Ascending aorta (tissue), 2 donors: ENCODE measurements at regions of chr19 and their contacts with region 1.

Region 1: GRCh38 chr19:49676690-49677231 is 310 bp upstream of the PRMT1 start:
- DNase-seq: peak; percentile 100
- H3K4me3 ChIP-seq: peak overlapping the region; percentile 95 to 97
- H3K27ac ChIP-seq: peak overlapping the region; percentile 93 to 94
- H3K4me1 ChIP-seq: peaks cover 0 to 27% of the 10 kb centered on the region in 2 donors
- H3K27me3 ChIP-seq: no peaks in the 10 kb centered on the region
- CTCF ChIP-seq: no peak

Region 2: DNA sequence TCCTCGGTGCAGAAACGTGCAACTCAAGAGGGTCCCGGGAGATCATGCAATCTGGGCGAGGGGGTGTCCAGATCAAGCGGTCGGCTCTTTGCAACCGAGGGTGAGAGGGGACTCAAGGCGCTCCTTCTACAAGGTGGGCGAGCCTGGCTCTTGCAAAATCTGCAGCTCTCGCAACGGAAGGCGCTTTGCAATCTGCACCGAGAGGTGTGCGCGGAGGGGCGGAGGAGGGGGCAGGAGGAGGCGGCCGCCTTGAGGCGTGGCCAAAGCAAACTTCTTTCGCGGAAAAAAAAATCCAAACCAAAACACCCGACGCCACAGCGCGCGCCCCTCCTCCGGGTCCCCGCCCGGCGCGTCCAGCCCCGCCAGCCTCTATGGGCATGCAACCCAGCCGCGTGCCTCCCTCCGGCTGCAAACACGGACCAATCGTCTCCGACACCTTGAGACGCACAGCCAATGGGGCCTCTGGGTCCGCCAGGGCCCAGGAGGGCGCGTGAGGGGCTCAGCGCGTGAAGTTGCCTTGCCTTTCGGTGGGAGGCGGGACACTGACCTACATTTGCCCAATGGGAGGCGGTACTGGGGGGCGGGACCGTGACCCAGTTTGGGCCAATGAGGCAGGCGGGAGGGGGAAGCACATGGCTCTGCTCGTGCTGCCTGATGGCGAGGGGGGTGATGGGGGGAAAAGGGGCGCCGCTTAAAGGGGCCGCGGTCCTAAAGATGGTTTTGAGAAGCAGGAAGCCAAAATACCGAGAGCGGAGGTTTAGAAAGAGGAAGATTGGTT is 1039.4 kb before region 1 on chr19 and contains the start of gene DBP:
- intact Hi-C with region 1: loop called (anchors 10 kb)
- DNase-seq: peak; percentile 98 to 100
- H3K4me3 ChIP-seq: peak within 1 kb of the TSS; percentile 66 to 89
- H3K27ac ChIP-seq: peak within 1 kb of the TSS; percentile 94 to 99
- H3K4me1 ChIP-seq: peaks cover 19 to 39% of the 10 kb centered on the region in 2 donors
- H3K27me3 ChIP-seq: no peaks in the 10 kb centered on the region
- CTCF ChIP-seq: no peak
- total RNA-seq, gene DBP: 0.21 TPM

Region 3: DNA sequence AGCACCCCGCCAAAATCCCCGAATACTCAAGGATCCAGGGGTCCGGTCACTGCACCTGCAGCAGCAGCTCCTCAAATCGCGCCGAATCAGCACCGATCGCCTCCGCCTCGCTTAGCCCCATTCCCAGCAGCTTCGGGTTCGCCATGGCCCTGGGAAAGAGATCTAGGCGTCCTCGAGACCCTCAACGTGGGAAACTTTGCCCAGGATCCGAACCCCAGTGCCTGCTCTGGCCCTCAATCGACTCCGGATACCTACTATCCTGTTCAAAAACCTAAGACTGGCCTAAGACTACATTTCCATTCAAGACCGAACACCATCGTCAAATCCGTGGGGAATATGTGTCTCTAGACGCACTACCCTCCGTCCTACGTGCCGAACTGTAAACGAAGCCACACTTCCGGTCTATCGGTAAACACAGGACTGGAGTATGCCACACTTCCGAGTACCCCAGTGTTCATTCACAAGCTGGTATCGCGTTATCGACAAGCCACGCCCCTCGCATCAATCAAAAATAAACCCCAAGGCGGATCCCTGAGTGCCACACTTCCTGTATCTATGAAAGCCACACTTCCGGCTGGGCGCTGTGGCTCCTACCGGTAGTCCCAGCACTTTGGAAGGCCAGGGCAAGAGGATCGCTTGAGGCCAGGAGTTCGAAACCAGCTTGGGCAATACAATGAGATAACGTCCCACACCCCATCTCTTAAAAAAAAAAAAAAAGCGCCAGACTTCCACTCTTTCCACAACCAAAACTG is 225.2 kb before region 1 on chr19 and contains the start of gene PIH1D1:
- intact Hi-C with region 1: loop called (anchors 5 kb)
- DNase-seq: peak; percentile 94 to 99
- H3K4me3 ChIP-seq: peak within 1 kb of the TSS; percentile 73 to 81
- H3K27ac ChIP-seq: peak within 1 kb of the TSS; percentile 88 to 95
- H3K4me1 ChIP-seq: peaks cover 0 to 10% of the 10 kb centered on the region in 2 donors
- H3K27me3 ChIP-seq: no peaks in the 10 kb centered on the region
- CTCF ChIP-seq: no peak
- total RNA-seq, gene PIH1D1: 177 TPM

Region 4: GRCh38 chr19:49590071-49590970 is 86.4 kb before region 1 on chr19:
- intact Hi-C with region 1: loop called (anchors 2 kb)
- DNase-seq: peak; percentile 87 to 97
- H3K4me3 ChIP-seq: peak overlapping the region; percentile 81 to 91
- H3K27ac ChIP-seq: peak overlapping the region; percentile 82 to 87
- H3K4me1 ChIP-seq: peaks cover 2 to 12% of the 10 kb centered on the region in 2 donors
- H3K27me3 ChIP-seq: no peaks in the 10 kb centered on the region
- CTCF ChIP-seq: peak in 1 of 3 experiments; percentile 6

Region 5: GRCh38 chr19:49665351-49666119 is 11.2 kb before region 1 on chr19 and contains the starts of genes BCL2L12 and IRF3:
- intact Hi-C with region 1: loop called (anchors 1 kb)
- DNase-seq: peak; percentile 88 to 98
- H3K4me3 ChIP-seq: peak within 1 kb of the TSS; percentile 83
- H3K27ac ChIP-seq: peak within 1 kb of the TSS; percentile 87 to 89
- H3K4me1 ChIP-seq: peaks cover 0 to 18% of the 10 kb centered on the region in 2 donors
- H3K27me3 ChIP-seq: no peaks in the 10 kb centered on the region
- CTCF ChIP-seq: no peak
- total RNA-seq, gene BCL2L12: 0.64 TPM
- total RNA-seq, gene IRF3: 75.9 TPM

Region 6: GRCh38 chr19:49817964-49818648 is 141.3 kb after region 1 on chr19 and contains the start of gene MED25:
- intact Hi-C with region 1: loop called (anchors 2 kb)
- DNase-seq: peak; percentile 30 to 92
- H3K4me3 ChIP-seq: peak within 1 kb of the TSS; percentile 78 to 85
- H3K27ac ChIP-seq: peak within 1 kb of the TSS; percentile 93 to 97
- H3K4me1 ChIP-seq: peaks cover 0 to 24% of the 10 kb centered on the region in 2 donors
- H3K27me3 ChIP-seq: no peaks in the 10 kb centered on the region
- CTCF ChIP-seq: peak; percentile 29 to 89 (median 33)
- total RNA-seq, gene MED25: 54.0 TPM

Region 7: DNA sequence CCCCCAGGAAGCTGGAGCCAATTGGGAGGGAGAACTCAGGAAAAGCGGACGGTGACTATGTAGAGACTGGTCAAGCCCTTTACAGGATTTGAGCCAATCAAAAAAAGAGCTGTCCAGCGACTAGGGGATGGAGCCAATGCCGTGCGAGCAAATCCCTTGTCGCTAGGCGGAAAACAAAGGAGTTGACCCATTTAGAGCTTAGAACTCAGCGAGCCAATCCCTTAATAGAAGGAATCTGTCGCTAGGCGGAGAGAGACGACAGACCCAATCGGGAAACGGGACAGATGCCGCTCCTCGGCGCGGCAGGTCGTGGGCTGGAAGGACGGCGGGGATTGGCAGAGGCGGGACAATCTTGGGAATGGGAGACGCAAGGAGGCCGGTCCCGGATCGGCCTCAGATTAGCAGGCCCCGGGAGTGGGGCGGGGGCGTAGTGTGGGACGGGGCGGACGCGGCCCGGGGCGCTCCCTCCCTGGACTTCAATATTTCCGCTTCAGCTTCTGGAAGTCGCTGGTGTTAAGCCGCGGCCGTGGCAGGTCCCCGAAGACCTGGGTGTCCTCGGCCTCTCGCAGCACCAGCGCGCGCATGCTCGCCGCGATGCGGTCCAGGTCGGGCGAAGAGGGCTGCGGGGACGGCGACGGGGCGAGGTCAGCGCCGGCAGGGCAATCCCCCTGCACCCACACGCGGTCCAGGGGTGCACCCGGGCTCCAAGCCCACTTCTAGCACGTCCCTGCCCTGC is 192.8 kb after region 1 on chr19:
- intact Hi-C with region 1: loop called (anchors 5 kb)
- DNase-seq: peak; percentile 95 to 98
- H3K4me3 ChIP-seq: peak overlapping the region; percentile 72 to 74
- H3K27ac ChIP-seq: peak overlapping the region; percentile 93 to 97
- H3K4me1 ChIP-seq: peaks cover 19 to 32% of the 10 kb centered on the region in 2 donors
- H3K27me3 ChIP-seq: no peaks in the 10 kb centered on the region
- CTCF ChIP-seq: no peak